Transverse colon (tissue), 4 donors: ENCODE measurements at regions of chr7 and their contacts with region 1.

Region 1: GRCh38 chr7:98400542-98401340 is at the start of gene BAIAP2L1:
- DNase-seq: peak; percentile 97
- H3K4me3 ChIP-seq: peak within 1 kb of the TSS; percentile 24 to 67 (median 52)
- H3K27ac ChIP-seq: peak within 1 kb of the TSS; percentile 87 to 96 (median 90)
- H3K4me1 ChIP-seq: peaks cover 4 to 34% (median 13%) of the 10 kb centered on the region in 4 donors
- H3K27me3 ChIP-seq: peaks cover 28% of the 10 kb centered on the region
- CTCF ChIP-seq: peak in 1 of 5 experiments; percentile 57
- EP300 ChIP-seq: no peak
- POLR2A ChIP-seq: peak; percentile 67
- total RNA-seq, gene BAIAP2L1: 39.8 to 59.8 (median 53.3) TPM

Region 2: GRCh38 chr7:98280791-98281756 is 119.7 kb before region 1 on chr7 and contains the start of gene BRI3:
- in situ Hi-C with region 1: loop called in 2 of 4 experiments (anchors 25 kb)
- intact Hi-C with region 1: no loop called
- DNase-seq: peak; percentile 95
- H3K4me3 ChIP-seq: peak within 1 kb of the TSS; percentile 64 to 97 (median 96)
- H3K27ac ChIP-seq: peak within 1 kb of the TSS; percentile 88 to 98 (median 96)
- H3K4me1 ChIP-seq: peaks cover 33 to 63% (median 56%) of the 10 kb centered on the region in 4 donors
- H3K27me3 ChIP-seq: no peaks in the 10 kb centered on the region
- CTCF ChIP-seq: peak in 1 of 5 experiments; percentile 44
- EP300 ChIP-seq: no peak
- POLR2A ChIP-seq: peak; percentile 98
- total RNA-seq, gene BRI3: 9.8 to 87.5 (median 51.5) TPM

Region 3: GRCh38 chr7:98294796-98295382 is 105.9 kb before region 1 on chr7:
- in situ Hi-C with region 1: loop called in 3 of 4 experiments (anchors 10 to 25 kb)
- intact Hi-C with region 1: no loop called
- DNase-seq: peak; percentile 64
- H3K4me3 ChIP-seq: no peak overlapping the region
- H3K27ac ChIP-seq: peak overlapping the region in 1 of 4 donors; percentile 1
- H3K4me1 ChIP-seq: peaks cover 0 to 5% (median 0%) of the 10 kb centered on the region in 4 donors
- H3K27me3 ChIP-seq: no peaks in the 10 kb centered on the region
- CTCF ChIP-seq: peak; percentile 40 to 76 (median 55)
- EP300 ChIP-seq: no peak
- POLR2A ChIP-seq: no peak

Region 4: GRCh38 chr7:98669329-98670000 is 268.7 kb after region 1 on chr7:
- in situ Hi-C with region 1: no loop called
- intact Hi-C with region 1: no loop called
- DNase-seq: no peak
- H3K4me3 ChIP-seq: no peak overlapping the region
- H3K27ac ChIP-seq: no peak overlapping the region
- H3K4me1 ChIP-seq: no peaks in the 10 kb centered on the region
- H3K27me3 ChIP-seq: no peaks in the 10 kb centered on the region
- CTCF ChIP-seq: no peak
- EP300 ChIP-seq: no peak
- POLR2A ChIP-seq: no peak